CD4-positive, alpha-beta memory T cell (primary cell): ENCODE measurements at regions of chr22 and their contacts with region 1.

Region 1: DNA sequence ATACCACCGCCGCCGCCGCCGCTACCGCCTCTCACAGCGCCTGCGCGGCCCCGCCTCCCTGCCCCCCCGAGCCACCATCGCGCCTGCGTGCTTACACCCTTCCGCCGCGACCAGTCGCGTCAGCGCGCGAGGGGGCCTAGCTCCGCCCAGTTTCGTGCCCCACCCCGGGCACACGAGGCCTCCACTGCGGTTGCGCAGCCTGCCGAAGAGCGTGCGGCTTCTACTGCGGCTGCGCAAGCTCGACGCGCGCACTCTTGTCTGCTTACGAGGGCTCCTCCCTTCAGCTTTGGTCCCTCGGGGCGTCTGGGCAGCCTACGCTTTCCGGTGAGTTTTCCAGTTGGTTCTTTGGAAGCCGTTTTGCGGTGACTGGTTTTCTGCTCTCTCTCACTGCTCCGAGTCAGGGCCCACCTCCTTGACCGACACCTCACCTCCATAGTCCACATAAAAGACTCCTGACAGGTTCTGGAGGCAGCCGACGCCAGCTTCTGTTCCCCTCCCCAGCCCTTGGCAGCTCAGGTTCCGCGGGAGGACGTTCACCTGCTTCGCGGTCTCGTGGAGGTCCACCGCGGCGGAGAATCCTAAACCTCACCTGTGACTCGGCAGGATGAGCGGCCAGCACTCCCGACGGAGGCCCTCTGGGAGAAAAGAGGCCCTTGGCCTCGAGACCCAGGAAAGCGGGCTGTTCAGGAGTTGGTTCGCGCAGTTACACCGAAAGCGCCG is at the start of gene PITPNB:
- DNase-seq: peak; percentile 97 to 99 (median 99)
- H3K4me3 ChIP-seq: peak within 1 kb of the TSS; percentile 86 to 94
- H3K4me3 Mint-ChIP-seq: peak within 1 kb of the TSS; percentile 99 to 100 (median 100)
- H3K27ac ChIP-seq: peak within 1 kb of the TSS; percentile 98
- H3K27ac Mint-ChIP-seq: peak within 1 kb of the TSS; percentile 99 to 100 (median 99)
- H3K4me1 ChIP-seq: peaks cover 53% of the 10 kb centered on the region
- H3K4me1 Mint-ChIP-seq: peaks cover 42 to 78% (median 66%) of the 10 kb centered on the region in 4 donors
- H3K27me3 ChIP-seq: no peaks in the 10 kb centered on the region
- H3K27me3 Mint-ChIP-seq: no peaks in the 10 kb centered on the region
- total RNA-seq, gene PITPNB: 72.5 to 76.4 TPM

Region 2: GRCh38 chr22:27853424-27853823 is 66.0 kb before region 1 on chr22:
- CTCF ChIA-PET with region 1: no interaction called
- POLR2A ChIA-PET with region 1: no interaction called
- intact Hi-C with region 1: no loop called
- DNase-seq: no peak
- H3K4me3 ChIP-seq: no peak overlapping the region
- H3K4me3 Mint-ChIP-seq: no peak overlapping the region
- H3K27ac ChIP-seq: no peak overlapping the region
- H3K27ac Mint-ChIP-seq: peak overlapping the region in 3 of 7 donors; percentile 8 to 47 (median 23)
- H3K4me1 ChIP-seq: no peaks in the 10 kb centered on the region
- H3K4me1 Mint-ChIP-seq: peaks cover 0 to 1% (median 0%) of the 10 kb centered on the region in 4 donors
- H3K27me3 ChIP-seq: no peaks in the 10 kb centered on the region
- H3K27me3 Mint-ChIP-seq: no peaks in the 10 kb centered on the region

Region 3: DNA sequence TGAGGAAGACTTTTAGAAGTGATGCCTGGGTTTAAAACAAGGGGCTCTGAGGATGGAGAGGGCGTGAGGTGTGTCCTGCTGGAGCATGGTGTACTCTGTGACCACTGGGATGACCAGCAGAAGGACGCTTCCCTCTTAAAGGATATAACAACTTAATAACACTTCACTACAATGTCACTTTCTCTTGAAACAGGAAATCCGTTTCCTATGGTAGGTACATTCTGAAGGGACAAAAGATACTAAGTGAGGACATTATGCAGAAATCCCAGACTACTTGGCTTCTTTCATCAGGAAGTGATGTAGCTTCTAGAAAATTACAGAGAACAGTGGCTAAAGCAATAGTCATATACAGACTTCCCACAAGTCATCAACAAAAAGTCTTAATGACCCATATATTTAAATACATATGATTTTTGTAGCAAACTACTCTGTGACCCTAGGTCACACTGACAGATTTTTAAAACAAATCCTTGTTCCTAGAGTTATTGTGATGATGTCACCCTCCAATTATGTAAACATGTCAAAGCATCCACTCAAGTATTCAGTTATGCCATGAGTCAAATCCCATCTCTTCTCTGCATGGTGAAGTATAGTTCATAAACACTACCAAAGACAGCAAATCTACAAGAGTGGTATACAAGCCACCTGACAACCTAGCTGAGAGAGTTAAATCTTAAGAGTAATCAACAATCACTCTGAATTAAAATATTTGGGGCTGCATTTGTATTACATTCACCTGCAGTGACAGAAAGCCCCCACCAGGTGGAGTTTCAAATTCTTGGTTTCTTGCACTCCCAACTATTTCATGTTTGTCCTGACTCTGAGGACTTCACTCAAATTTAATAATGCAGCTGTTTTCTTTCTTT is 33.2 kb before region 1 on chr22:
- CTCF ChIA-PET with region 1: interaction called, 16 read pairs
- POLR2A ChIA-PET with region 1: no interaction called
- intact Hi-C with region 1: loop called (anchors 2 kb)
- DNase-seq: peak; percentile 30 to 49 (median 38)
- H3K4me3 ChIP-seq: no peak overlapping the region
- H3K4me3 Mint-ChIP-seq: no peak overlapping the region
- H3K27ac ChIP-seq: no peak overlapping the region
- H3K27ac Mint-ChIP-seq: peak overlapping the region in 3 of 7 donors; percentile 19 to 65 (median 57)
- H3K4me1 ChIP-seq: no peaks in the 10 kb centered on the region
- H3K4me1 Mint-ChIP-seq: peaks cover 0 to 3% (median 1%) of the 10 kb centered on the region in 4 donors
- H3K27me3 ChIP-seq: no peaks in the 10 kb centered on the region
- H3K27me3 Mint-ChIP-seq: no peaks in the 10 kb centered on the region

Region 4: DNA sequence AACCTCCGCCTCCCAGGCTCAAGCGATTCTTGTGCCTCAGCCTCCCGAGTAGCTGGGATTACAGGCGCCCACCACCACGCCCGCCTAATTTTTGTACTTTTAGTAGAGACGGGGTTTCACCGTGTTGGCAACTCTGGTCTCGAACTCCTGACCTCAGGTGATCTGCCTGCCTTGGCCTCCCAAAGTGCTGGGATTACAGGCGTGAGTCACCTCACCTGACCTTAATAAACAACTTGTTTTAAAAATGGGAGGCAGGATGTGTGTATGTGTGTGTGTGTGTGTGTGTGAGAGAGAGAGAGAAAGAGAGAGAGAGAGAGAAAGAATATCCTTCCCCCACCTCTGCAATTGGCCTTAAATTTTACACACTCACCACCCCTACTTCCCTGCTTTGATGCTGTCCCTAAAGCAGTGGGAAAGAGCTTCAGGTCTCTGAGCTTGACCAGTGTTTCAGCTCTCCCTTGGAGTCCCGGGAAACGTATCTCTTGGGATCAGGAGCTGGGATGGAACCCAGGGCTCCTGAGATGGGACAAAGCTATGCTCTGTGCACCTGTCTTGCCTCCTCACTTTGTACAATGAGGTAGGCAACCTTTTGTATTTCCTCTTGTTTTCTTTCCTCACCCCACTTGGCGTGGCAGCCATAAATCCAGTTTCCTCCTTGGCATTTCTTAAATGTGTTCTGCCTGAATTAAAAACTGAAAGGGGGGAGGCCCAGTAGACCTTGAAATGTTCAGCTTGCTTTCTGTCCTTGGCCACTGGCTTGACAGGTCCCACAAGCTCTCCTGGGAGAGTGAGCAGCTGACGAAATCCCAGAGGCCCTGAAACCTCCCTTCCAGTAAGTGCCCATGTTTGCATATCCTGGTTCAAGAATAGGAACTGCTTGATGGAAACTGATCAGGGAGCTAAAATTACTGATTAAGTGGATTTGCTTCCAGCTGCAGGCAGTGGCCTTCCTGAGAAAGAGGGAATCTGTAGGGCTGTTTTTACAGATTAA is 898.8 kb after region 1 on chr22:
- CTCF ChIA-PET with region 1: no interaction called
- POLR2A ChIA-PET with region 1: no interaction called
- intact Hi-C with region 1: loop called (anchors 10 kb)
- DNase-seq: peak in 1 of 5 donors; percentile 20
- H3K4me3 ChIP-seq: no peak overlapping the region
- H3K4me3 Mint-ChIP-seq: peak overlapping the region; percentile 20 to 78 (median 70)
- H3K27ac ChIP-seq: no peak overlapping the region
- H3K27ac Mint-ChIP-seq: peak overlapping the region; percentile 23 to 94 (median 74)
- H3K4me1 ChIP-seq: peaks cover 70% of the 10 kb centered on the region
- H3K4me1 Mint-ChIP-seq: peaks cover 45 to 85% (median 70%) of the 10 kb centered on the region in 4 donors
- H3K27me3 ChIP-seq: no peaks in the 10 kb centered on the region
- H3K27me3 Mint-ChIP-seq: no peaks in the 10 kb centered on the region

Region 5: DNA sequence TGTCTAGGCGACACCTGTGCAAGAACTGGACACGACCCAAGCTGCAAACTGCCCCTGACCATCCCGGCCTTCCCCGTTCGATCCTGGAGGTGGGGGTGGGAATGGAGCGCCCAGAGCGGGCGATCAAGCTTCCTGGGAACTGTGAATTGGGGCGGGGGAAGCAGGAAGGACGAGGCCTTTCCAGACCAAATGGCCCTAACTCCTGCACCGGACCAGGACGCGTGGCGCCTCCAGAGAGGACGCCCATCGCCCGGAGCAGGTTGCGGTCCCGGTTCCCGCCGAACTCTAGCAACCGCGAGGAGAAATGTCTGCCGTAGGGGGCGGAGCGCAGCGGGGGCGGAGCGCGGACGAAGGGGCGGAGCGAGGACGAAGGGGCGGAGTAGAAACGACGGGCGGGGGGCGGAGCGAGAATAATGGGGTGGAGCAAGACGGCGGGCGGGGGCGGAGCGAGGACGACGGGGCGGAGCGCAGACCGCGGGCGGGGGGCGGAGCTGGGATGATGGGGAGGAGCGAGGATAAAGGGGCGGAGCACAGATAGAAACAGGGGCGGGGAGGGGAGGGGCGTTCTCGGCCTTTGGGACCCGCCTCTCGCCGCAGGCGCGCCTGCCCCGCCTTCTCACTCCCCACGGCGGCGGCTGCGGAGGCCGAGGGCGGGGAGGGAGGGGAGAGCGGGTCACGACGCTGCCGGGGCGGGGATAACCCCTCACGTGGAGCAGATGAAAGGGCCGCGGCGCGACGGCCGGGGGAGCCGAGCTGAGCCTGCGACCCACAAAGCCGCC is 963.7 kb after region 1 on chr22 and contains the start of gene ZNRF3:
- CTCF ChIA-PET with region 1: no interaction called
- POLR2A ChIA-PET with region 1: no interaction called
- intact Hi-C with region 1: loop called (anchors 2 kb)
- DNase-seq: peak; percentile 86 to 90 (median 87)
- H3K4me3 ChIP-seq: peak within 1 kb of the TSS; percentile 61 to 83
- H3K4me3 Mint-ChIP-seq: peak within 1 kb of the TSS; percentile 88 to 92 (median 90)
- H3K27ac ChIP-seq: no peak within 1 kb of the TSS
- H3K27ac Mint-ChIP-seq: peak within 1 kb of the TSS; percentile 74 to 87 (median 81)
- H3K4me1 ChIP-seq: peaks cover 15% of the 10 kb centered on the region
- H3K4me1 Mint-ChIP-seq: peaks cover 9 to 32% (median 21%) of the 10 kb centered on the region in 4 donors
- H3K27me3 ChIP-seq: no peaks in the 10 kb centered on the region
- H3K27me3 Mint-ChIP-seq: peaks cover 5 to 7% of the 10 kb centered on the region in 2 donors
- total RNA-seq, gene ZNRF3: 0.70 to 0.89 TPM

Region 6: DNA sequence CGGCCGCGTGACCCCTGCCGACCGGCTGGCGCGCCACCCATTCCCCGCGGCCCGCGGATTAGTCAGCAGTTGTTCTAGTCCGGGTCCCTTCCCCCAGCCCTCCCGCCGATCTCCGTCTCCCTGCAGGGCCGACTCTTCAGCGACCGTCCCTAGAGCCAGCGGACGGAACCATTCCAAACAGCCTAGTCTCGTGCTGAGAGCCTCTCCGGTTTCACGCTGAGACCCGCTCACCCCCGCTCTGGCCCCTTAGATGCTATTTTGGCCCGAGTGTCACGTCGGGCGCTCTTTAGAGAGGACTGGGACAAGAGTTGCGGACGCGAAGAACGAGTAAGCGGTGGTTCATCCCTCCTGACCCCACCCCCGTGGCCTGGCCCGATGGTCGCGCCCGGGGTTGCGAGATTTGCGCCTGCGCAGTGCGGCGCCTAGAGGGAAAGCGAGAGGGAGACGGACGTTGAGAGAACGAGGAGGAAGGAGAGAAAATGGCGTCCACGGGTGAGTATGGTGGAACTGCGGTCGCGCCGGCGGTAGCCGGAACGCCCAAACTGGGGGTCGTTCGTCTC is 1348.6 kb after region 1 on chr22 and contains the starts of genes EWSR1 and RHBDD3:
- CTCF ChIA-PET with region 1: no interaction called
- POLR2A ChIA-PET with region 1: no interaction called
- intact Hi-C with region 1: loop called (anchors 2 kb)
- DNase-seq: peak; percentile 95 to 100 (median 96)
- H3K4me3 ChIP-seq: peak within 1 kb of the TSS; percentile 78 to 79
- H3K4me3 Mint-ChIP-seq: peak within 1 kb of the TSS; percentile 91 to 99 (median 98)
- H3K27ac ChIP-seq: peak within 1 kb of the TSS; percentile 99
- H3K27ac Mint-ChIP-seq: peak within 1 kb of the TSS; percentile 97 to 100 (median 99)
- H3K4me1 ChIP-seq: peaks cover 54% of the 10 kb centered on the region
- H3K4me1 Mint-ChIP-seq: peaks cover 37 to 63% (median 47%) of the 10 kb centered on the region in 4 donors
- H3K27me3 ChIP-seq: no peaks in the 10 kb centered on the region
- H3K27me3 Mint-ChIP-seq: no peaks in the 10 kb centered on the region
- total RNA-seq, gene EWSR1: 247 to 250 TPM
- total RNA-seq, gene RHBDD3: 14.2 to 16.1 TPM

Region 7: DNA sequence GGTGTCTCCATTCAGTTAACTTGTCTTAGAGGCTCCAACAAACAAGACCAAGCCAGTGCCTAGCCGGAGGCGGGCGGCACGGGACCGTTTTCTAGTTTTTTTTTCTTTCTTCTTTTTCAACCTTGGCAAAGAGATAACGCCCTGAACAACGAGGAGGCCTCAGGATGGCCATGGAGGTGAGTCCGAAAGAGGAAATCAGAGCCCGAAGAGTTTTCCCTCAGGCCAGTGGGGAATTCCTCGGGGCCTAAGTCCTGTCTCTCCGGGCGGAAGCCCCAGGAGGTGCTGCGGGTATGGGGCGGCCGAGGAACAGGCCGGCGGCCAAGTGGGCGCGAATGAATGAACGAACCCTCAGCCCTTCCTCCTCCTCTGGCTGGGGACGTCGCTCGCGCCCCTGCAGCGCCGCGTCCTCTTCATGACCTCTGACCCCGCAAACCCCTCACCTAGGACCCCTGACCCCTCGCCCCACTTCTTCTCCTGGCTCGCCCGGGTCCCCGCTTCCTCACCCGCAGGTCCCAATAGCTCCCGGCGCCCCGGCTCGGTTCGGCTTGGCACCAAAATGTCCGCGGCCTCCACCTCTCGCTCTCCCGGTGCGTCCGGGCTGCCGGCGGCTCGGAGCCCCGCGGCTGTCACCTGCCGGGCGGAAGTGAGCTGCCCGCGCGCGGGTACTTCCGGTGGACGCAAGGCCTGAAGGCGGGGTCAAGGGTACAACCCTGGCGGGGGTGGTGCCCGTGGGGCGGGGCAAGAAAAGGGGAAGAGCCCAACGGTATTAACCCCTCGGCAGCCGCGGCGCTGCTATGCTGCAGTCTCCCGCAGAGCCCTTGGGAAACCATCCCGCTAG is 1468.8 kb after region 1 on chr22 and contains the start of gene AP1B1:
- CTCF ChIA-PET with region 1: no interaction called
- POLR2A ChIA-PET with region 1: no interaction called
- intact Hi-C with region 1: loop called (anchors 10 kb)
- DNase-seq: peak; percentile 87 to 91 (median 88)
- H3K4me3 ChIP-seq: peak within 1 kb of the TSS; percentile 64 to 77
- H3K4me3 Mint-ChIP-seq: peak within 1 kb of the TSS; percentile 89 to 98 (median 93)
- H3K27ac ChIP-seq: peak within 1 kb of the TSS; percentile 86
- H3K27ac Mint-ChIP-seq: peak within 1 kb of the TSS; percentile 90 to 96 (median 95)
- H3K4me1 ChIP-seq: peaks cover 54% of the 10 kb centered on the region
- H3K4me1 Mint-ChIP-seq: peaks cover 26 to 54% (median 39%) of the 10 kb centered on the region in 4 donors
- H3K27me3 ChIP-seq: no peaks in the 10 kb centered on the region
- H3K27me3 Mint-ChIP-seq: no peaks in the 10 kb centered on the region
- total RNA-seq, gene AP1B1: 41.3 to 42.7 TPM